CD8-positive, alpha-beta T cell (primary cell): ENCODE measurements at regions of chr11 and their contacts with region 1.

Region 1: DNA sequence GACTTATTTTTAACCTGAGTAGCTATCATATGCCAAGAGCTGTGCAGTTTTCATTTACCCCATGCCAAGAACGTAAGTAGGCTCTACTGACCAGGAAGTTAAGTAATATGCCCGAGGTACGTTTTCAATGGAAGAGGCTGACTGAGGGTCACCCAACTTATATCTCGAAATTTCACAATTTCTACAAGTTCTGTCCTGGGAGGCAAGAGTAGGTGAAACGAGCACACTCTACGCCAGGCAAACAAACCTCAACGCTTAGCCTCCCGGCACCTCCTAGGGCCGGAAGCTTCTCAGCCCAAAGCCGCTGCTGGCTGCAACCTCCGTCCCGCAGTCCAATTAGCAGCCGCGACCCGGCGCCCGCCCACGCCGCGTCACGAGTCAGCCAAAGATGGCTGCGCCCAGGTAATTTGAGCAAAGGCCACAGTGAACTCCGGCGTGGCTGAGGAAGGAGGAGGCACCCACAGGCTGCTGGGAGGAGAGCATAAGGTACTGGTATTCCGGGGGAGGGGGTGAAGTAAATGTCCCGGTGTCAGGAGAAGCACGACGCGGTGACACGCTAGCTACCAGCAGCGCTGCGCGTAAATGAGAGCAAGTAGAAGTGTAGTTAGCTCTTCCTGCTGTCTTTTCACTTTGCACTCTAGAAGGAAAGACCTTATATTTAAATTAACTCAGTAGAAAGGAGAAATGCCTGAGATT is at the start of gene TMEM126A:
- DNase-seq: peak; percentile 77 to 94 (median 90)
- ATAC-seq: peak; percentile 98
- H3K4me3 ChIP-seq: peak within 1 kb of the TSS; percentile 82 to 92
- H3K4me3 Mint-ChIP-seq: peak within 1 kb of the TSS; percentile 92
- H3K27ac ChIP-seq: peak within 1 kb of the TSS; percentile 75 to 90
- H3K27ac Mint-ChIP-seq: peak within 1 kb of the TSS; percentile 96
- H3K4me1 ChIP-seq: peaks cover 18% of the 10 kb centered on the region
- H3K4me1 Mint-ChIP-seq: peaks cover 39% of the 10 kb centered on the region
- H3K27me3 ChIP-seq: no peaks in the 10 kb centered on the region
- H3K27me3 Mint-ChIP-seq: peaks cover 17% of the 10 kb centered on the region
- CTCF ChIP-seq: no peak
- total RNA-seq, gene TMEM126A: 23.3 to 26.8 TPM

Region 2: GRCh38 chr11:85530634-85531033 is 117.1 kb before region 1 on chr11:
- CTCF ChIA-PET with region 1: no interaction called
- POLR2A ChIA-PET with region 1: no interaction called
- intact Hi-C with region 1: no loop called
- DNase-seq: no peak
- ATAC-seq: no peak
- H3K4me3 ChIP-seq: no peak overlapping the region
- H3K4me3 Mint-ChIP-seq: no peak overlapping the region
- H3K27ac ChIP-seq: no peak overlapping the region
- H3K27ac Mint-ChIP-seq: no peak overlapping the region
- H3K4me1 ChIP-seq: no peaks in the 10 kb centered on the region
- H3K4me1 Mint-ChIP-seq: no peaks in the 10 kb centered on the region
- H3K27me3 ChIP-seq: no peaks in the 10 kb centered on the region
- H3K27me3 Mint-ChIP-seq: peaks cover 2% of the 10 kb centered on the region
- CTCF ChIP-seq: no peak

Region 3: DNA sequence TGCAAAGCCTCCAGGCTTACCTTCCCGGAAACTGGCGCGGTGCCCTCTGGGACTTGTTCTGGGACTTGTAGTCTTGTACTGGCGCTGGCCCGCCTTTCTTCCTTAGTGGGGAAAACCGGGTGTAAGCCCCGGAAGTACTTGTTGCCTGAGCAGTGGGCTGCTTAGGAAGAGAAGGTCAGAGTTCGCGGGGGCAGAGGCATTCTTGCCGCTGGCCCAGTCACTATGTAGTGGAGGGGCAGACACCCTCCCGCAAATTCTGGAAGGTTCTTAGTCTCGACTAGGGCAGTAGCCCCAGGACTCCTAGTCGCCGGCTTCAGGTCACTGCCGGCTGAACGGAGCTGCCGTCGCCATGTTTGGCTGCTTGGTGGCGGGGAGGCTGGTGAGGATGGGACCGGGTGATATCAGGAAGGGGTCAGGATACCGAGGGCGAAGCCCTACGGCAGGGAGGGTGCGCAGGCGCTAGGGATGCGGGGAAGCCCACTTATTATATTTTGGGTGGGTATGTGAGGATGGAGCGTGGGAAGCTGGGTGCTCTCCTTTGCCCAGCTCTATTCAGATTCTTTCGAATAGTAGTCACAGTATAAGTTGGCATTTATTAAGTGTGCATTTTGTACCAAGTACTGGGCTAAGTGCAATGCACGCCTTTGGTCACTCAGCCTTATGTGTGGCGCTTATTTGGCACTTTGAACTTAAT is 654.5 kb after region 1 on chr11 and contains the start of gene HIKESHI:
- CTCF ChIA-PET with region 1: no interaction called
- POLR2A ChIA-PET with region 1: no interaction called
- intact Hi-C with region 1: loop called (anchors 1 to 5 kb)
- DNase-seq: peak; percentile 74 to 96 (median 93)
- ATAC-seq: peak; percentile 98
- H3K4me3 ChIP-seq: peak within 1 kb of the TSS; percentile 73 to 86
- H3K4me3 Mint-ChIP-seq: peak within 1 kb of the TSS; percentile 99
- H3K27ac ChIP-seq: peak within 1 kb of the TSS; percentile 74 to 76
- H3K27ac Mint-ChIP-seq: peak within 1 kb of the TSS; percentile 99
- H3K4me1 ChIP-seq: peaks cover 22% of the 10 kb centered on the region
- H3K4me1 Mint-ChIP-seq: peaks cover 29% of the 10 kb centered on the region
- H3K27me3 ChIP-seq: no peaks in the 10 kb centered on the region
- H3K27me3 Mint-ChIP-seq: no peaks in the 10 kb centered on the region
- CTCF ChIP-seq: no peak
- total RNA-seq, gene HIKESHI: 4.9 to 6.9 TPM